ENCODE measurements at regions of chr3 and their contacts with region 1.

Region 1: GRCh38 chr3:111967651-111968274 is 11.1 kb upstream of the ABHD10 start:
- DNase-seq: peak; percentile 82
- ATAC-seq: peak; percentile 92
- H3K4me3 ChIP-seq: no peak overlapping the region
- H3K27ac ChIP-seq: peak overlapping the region; percentile 85
- H3K4me1 ChIP-seq: peaks cover 31 to 52% of the 10 kb centered on the region in 2 experiments
- H3K27me3 ChIP-seq: no peaks in the 10 kb centered on the region
- CTCF ChIP-seq: peak; percentile 94 to 98 (median 96)
- POLR2A ChIP-seq: no peak
- RAD21 ChIP-seq: peak; percentile 99

Region 2: DNA sequence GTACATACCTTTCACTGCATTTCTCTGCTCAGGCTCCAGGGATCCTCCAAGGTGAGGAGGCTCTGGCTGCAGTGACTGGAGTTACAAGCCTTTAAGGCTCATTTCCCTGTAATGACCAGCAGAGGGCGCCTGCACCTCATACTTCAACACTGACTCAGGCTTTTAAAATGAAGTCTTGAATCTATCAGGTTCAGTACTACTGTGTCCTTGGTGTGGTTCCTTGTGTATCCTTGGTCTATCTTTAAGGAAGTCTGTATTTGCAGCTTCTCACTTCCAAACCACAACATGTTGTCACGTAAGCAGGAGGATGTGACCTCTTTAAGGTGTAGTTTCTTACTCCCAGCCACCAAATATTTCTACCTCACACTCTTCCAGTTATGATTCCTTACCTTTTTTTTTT is 250.2 kb before region 1 on chr3:
- CTCF ChIA-PET with region 1: interaction called, 48 read pairs
- POLR2A ChIA-PET with region 1: no interaction called
- RAD21 ChIA-PET with region 1: interaction called in 1 of 2 experiments, 6 read pairs
- intact Hi-C with region 1: loop called (anchors 1 kb)
- DNase-seq: peak; percentile 81
- ATAC-seq: peak; percentile 93
- H3K4me3 ChIP-seq: no peak overlapping the region
- H3K27ac ChIP-seq: peak overlapping the region; percentile 47
- H3K4me1 ChIP-seq: peaks cover 21 to 52% of the 10 kb centered on the region in 2 experiments
- H3K27me3 ChIP-seq: no peaks in the 10 kb centered on the region
- CTCF ChIP-seq: peak; percentile 84 to 96 (median 95)
- POLR2A ChIP-seq: no peak
- RAD21 ChIP-seq: peak; percentile 100

Region 3: GRCh38 chr3:111904376-111905241 is 63.2 kb before region 1 on chr3:
- CTCF ChIA-PET with region 1: interaction called, 4 read pairs
- POLR2A ChIA-PET with region 1: interaction called, 4 read pairs
- RAD21 ChIA-PET with region 1: no interaction called
- intact Hi-C with region 1: loop called (anchors 2 kb)
- DNase-seq: peak; percentile 89
- ATAC-seq: peak; percentile 29
- H3K4me3 ChIP-seq: no peak overlapping the region
- H3K27ac ChIP-seq: peak overlapping the region; percentile 96
- H3K4me1 ChIP-seq: peaks cover 44 to 100% of the 10 kb centered on the region in 2 experiments
- H3K27me3 ChIP-seq: no peaks in the 10 kb centered on the region
- CTCF ChIP-seq: peak in 1 of 3 experiments; percentile 26; a peak in 2 of 6 replicates
- POLR2A ChIP-seq: no peak
- RAD21 ChIP-seq: no peak

Region 4: GRCh38 chr3:111924283-111924682 is 43.5 kb before region 1 on chr3:
- CTCF ChIA-PET with region 1: interaction called, 4 read pairs
- POLR2A ChIA-PET with region 1: interaction called, 7 read pairs
- RAD21 ChIA-PET with region 1: no interaction called
- intact Hi-C with region 1: loop called (anchors 1 kb)
- DNase-seq: no peak
- ATAC-seq: no peak
- H3K4me3 ChIP-seq: no peak overlapping the region
- H3K27ac ChIP-seq: peak overlapping the region; percentile 96
- H3K4me1 ChIP-seq: peaks cover 69 to 95% of the 10 kb centered on the region in 2 experiments
- H3K27me3 ChIP-seq: no peaks in the 10 kb centered on the region
- CTCF ChIP-seq: no peak
- POLR2A ChIP-seq: no peak
- RAD21 ChIP-seq: no peak

Region 5: DNA sequence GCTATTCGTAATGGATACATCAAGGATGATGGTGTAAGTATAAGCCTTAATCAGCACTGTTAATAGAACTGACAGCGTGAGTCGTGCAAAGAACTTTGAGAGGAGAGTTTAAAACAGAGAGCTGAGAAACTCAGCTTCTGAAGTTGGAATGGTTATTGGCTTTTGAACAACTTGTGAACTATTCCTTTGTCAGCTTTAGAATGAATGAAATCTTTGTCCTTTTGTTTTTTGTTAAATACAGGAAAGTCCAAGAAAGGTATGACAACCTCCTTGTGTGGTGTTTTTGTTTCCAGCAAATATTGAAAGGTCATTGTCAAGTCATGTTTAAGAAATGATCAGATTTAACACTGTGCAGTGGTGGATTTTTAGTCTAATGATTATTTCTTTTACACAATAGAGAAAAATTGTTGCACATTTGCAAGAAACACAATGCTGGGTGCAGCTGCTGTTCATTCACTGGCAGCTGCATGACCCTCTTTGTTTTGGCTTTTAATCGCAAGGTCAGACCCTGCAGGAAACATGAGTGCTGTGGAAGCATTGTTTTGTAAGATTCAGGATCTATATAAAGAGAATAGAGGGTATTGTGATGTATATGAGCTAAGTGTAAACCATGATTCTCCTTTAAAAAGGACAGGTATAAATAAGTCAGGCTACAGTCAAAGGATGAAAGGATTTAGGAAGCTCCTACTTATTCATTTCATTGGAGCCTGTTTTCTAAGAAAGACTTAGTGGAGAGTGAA is 10.6 kb before region 1 on chr3:
- CTCF ChIA-PET with region 1: interaction called, 19 read pairs
- POLR2A ChIA-PET with region 1: no interaction called
- RAD21 ChIA-PET with region 1: no interaction called
- intact Hi-C with region 1: no loop called
- DNase-seq: no peak
- ATAC-seq: peak; percentile 39
- H3K4me3 ChIP-seq: no peak overlapping the region
- H3K27ac ChIP-seq: peak overlapping the region; percentile 85
- H3K4me1 ChIP-seq: peaks cover 37% of the 10 kb centered on the region in 2 experiments
- H3K27me3 ChIP-seq: no peaks in the 10 kb centered on the region
- CTCF ChIP-seq: no peak
- POLR2A ChIP-seq: no peak
- RAD21 ChIP-seq: no peak

Region 6: GRCh38 chr3:111989061-111989678 is 21.4 kb after region 1 on chr3:
- CTCF ChIA-PET with region 1: interaction called, 14 read pairs
- POLR2A ChIA-PET with region 1: no interaction called
- RAD21 ChIA-PET with region 1: no interaction called
- intact Hi-C with region 1: no loop called
- DNase-seq: peak; percentile 63
- ATAC-seq: peak; percentile 87
- H3K4me3 ChIP-seq: no peak overlapping the region
- H3K27ac ChIP-seq: peak overlapping the region; percentile 20; the same call in 1 of the 2 replicates
- H3K4me1 ChIP-seq: no peaks in the 10 kb centered on the region
- H3K27me3 ChIP-seq: no peaks in the 10 kb centered on the region
- CTCF ChIP-seq: peak; percentile 76 to 94 (median 86)
- POLR2A ChIP-seq: no peak
- RAD21 ChIP-seq: peak; percentile 78

Region 7: GRCh38 chr3:112043603-112044201 is 75.9 kb after region 1 on chr3:
- CTCF ChIA-PET with region 1: interaction called, 10 read pairs
- POLR2A ChIA-PET with region 1: no interaction called
- RAD21 ChIA-PET with region 1: interaction called in 1 of 2 experiments, 3 read pairs
- intact Hi-C with region 1: no loop called
- DNase-seq: peak; percentile 75
- ATAC-seq: peak; percentile 97
- H3K4me3 ChIP-seq: peak overlapping the region; percentile 11 to 40; a peak in 3 of 4 replicates
- H3K27ac ChIP-seq: no peak overlapping the region; the same call in 1 of the 2 replicates
- H3K4me1 ChIP-seq: peaks cover 0 to 26% of the 10 kb centered on the region in 2 experiments; a peak in 2 of 4 replicates
- H3K27me3 ChIP-seq: no peaks in the 10 kb centered on the region
- CTCF ChIP-seq: peak; percentile 87 to 99 (median 96)
- POLR2A ChIP-seq: no peak
- RAD21 ChIP-seq: peak; percentile 91

Region 8: GRCh38 chr3:112247900-112248299 is 280.1 kb after region 1 on chr3:
- CTCF ChIA-PET with region 1: no interaction called
- POLR2A ChIA-PET with region 1: no interaction called
- RAD21 ChIA-PET with region 1: no interaction called
- intact Hi-C with region 1: no loop called
- DNase-seq: no peak
- ATAC-seq: no peak
- H3K4me3 ChIP-seq: no peak overlapping the region
- H3K27ac ChIP-seq: no peak overlapping the region
- H3K4me1 ChIP-seq: no peaks in the 10 kb centered on the region
- H3K27me3 ChIP-seq: no peaks in the 10 kb centered on the region
- CTCF ChIP-seq: no peak
- POLR2A ChIP-seq: no peak
- RAD21 ChIP-seq: no peak

Measured in HCT116 (cell line).